ENCODE measurements at regions of chr9 and their contacts with region 1.

Region 1: GRCh38 chr9:91422758-91423711 is 597 bp downstream of the NFIL3 start:
- DNase-seq: peak; percentile 59 to 82
- ATAC-seq: peak; percentile 34 to 57 (median 50)
- H3K4me3 ChIP-seq: peak overlapping the region; percentile 75
- H3K4me3 Mint-ChIP-seq: peak overlapping the region; percentile 97
- H3K27ac ChIP-seq: peak overlapping the region; percentile 58
- H3K27ac Mint-ChIP-seq: peak overlapping the region; percentile 92 to 98
- H3K4me1 ChIP-seq: peaks cover 44% of the 10 kb centered on the region
- H3K4me1 Mint-ChIP-seq: peaks cover 57 to 66% of the 10 kb centered on the region in 2 donors
- H3K27me3 ChIP-seq: peaks cover 10% of the 10 kb centered on the region
- H3K27me3 Mint-ChIP-seq: peaks cover 0 to 5% of the 10 kb centered on the region in 2 donors
- CTCF ChIP-seq: no peak

Region 2: DNA sequence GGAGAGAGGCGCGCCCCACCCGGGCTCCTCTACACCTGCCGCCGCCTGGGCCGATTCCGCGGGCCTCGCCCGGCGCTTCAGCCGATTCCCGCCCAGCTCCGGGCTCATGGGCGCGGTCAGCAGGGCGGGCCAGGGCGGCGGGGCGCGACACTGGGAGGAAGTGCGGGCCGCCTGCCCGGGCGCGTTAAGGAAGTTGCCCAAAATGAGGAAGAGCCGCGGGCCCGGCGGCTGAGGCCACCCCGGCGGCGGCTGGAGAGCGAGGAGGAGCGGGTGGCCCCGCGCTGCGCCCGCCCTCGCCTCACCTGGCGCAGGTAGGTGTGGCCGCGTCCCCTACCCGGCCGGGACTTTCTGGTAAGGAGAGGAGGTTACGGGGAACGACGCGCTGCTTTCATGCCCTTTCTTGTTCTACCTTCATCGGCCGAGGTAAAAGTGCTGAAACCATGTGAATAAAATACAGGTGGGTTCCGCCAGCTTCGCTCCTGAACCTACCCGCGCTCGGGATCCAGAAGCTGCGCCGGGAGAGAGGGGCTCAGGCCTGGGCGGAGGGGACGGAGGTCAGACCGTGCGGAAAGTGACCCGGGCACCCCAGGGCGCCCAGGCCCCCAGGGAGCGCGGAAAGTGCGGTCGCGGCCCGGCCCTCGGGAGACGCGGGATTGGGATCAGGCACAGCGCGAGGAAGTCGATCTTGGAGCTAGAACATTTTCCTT is 621.3 kb before region 1 on chr9 and contains the start of gene SYK:
- intact Hi-C with region 1: loop called (anchors 5 kb)
- DNase-seq: peak in 1 of 2 donors; percentile 45
- ATAC-seq: peak; percentile 66 to 82 (median 69)
- H3K4me3 ChIP-seq: peak within 1 kb of the TSS; percentile 98
- H3K4me3 Mint-ChIP-seq: peak within 1 kb of the TSS; percentile 98
- H3K27ac ChIP-seq: peak within 1 kb of the TSS; percentile 86
- H3K27ac Mint-ChIP-seq: peak within 1 kb of the TSS; percentile 93 to 97
- H3K4me1 ChIP-seq: peaks cover 9% of the 10 kb centered on the region
- H3K4me1 Mint-ChIP-seq: peaks cover 50 to 64% of the 10 kb centered on the region in 2 donors
- H3K27me3 ChIP-seq: no peaks in the 10 kb centered on the region
- H3K27me3 Mint-ChIP-seq: no peaks in the 10 kb centered on the region
- CTCF ChIP-seq: no peak
- total RNA-seq, gene SYK: 75.5 to 104 (median 78.0) TPM

Region 3: GRCh38 chr9:90914868-90915483 is 508.1 kb before region 1 on chr9:
- intact Hi-C with region 1: loop called (anchors 1 kb)
- DNase-seq: peak; percentile 59 to 88
- ATAC-seq: peak; percentile 89 to 99 (median 99)
- H3K4me3 ChIP-seq: no peak overlapping the region
- H3K4me3 Mint-ChIP-seq: no peak overlapping the region
- H3K27ac ChIP-seq: no peak overlapping the region
- H3K27ac Mint-ChIP-seq: no peak overlapping the region
- H3K4me1 ChIP-seq: peaks cover 3% of the 10 kb centered on the region
- H3K4me1 Mint-ChIP-seq: no peaks in the 10 kb centered on the region
- H3K27me3 ChIP-seq: no peaks in the 10 kb centered on the region
- H3K27me3 Mint-ChIP-seq: peaks cover 0 to 3% of the 10 kb centered on the region in 2 donors
- CTCF ChIP-seq: peak; percentile 91

Region 4: GRCh38 chr9:91036826-91037510 is 386.1 kb before region 1 on chr9:
- intact Hi-C with region 1: loop called (anchors 2 kb)
- DNase-seq: peak; percentile 36 to 75
- ATAC-seq: peak; percentile 78 to 86 (median 82)
- H3K4me3 ChIP-seq: no peak overlapping the region
- H3K4me3 Mint-ChIP-seq: peak overlapping the region; percentile 69
- H3K27ac ChIP-seq: no peak overlapping the region
- H3K27ac Mint-ChIP-seq: peak overlapping the region in 1 of 2 donors; percentile 71
- H3K4me1 ChIP-seq: peaks cover 23% of the 10 kb centered on the region
- H3K4me1 Mint-ChIP-seq: peaks cover 37 to 47% of the 10 kb centered on the region in 2 donors
- H3K27me3 ChIP-seq: no peaks in the 10 kb centered on the region
- H3K27me3 Mint-ChIP-seq: peaks cover 0 to 4% of the 10 kb centered on the region in 2 donors
- CTCF ChIP-seq: peak; percentile 53

Region 5: DNA sequence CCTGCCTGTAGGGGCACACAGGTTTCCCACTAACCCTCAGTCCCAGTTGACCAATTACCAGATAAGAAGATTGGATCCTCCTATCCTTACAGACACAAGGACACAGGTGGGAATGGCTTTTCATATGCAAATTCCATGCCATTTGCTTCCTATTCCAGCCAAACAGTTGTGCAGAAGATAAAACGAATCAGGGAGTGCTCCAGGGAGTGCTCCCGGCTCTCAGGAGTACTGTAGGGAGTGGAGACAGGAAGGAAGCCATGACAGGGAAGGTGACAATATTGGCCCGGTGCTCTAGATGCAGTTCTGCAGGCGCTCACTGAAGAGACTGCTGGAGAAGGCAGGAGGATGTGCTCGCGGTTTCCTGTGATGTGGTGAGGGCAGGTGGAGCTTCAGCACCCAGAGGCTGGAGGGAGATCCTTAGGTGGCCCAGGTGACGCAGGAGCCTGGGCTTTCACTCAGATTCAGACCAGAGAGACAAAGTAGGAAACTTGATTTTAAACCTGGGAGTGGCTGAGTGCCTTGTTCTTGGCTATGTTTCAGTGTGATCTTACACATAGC is 321.3 kb before region 1 on chr9:
- intact Hi-C with region 1: loop called (anchors 5 kb)
- DNase-seq: peak; percentile 41 to 92
- ATAC-seq: peak; percentile 59 to 83 (median 63)
- H3K4me3 ChIP-seq: no peak overlapping the region
- H3K4me3 Mint-ChIP-seq: peak overlapping the region; percentile 57
- H3K27ac ChIP-seq: no peak overlapping the region
- H3K27ac Mint-ChIP-seq: peak overlapping the region; percentile 65 to 85
- H3K4me1 ChIP-seq: peaks cover 38% of the 10 kb centered on the region
- H3K4me1 Mint-ChIP-seq: peaks cover 36 to 37% of the 10 kb centered on the region in 2 donors
- H3K27me3 ChIP-seq: no peaks in the 10 kb centered on the region
- H3K27me3 Mint-ChIP-seq: peaks cover 0 to 5% of the 10 kb centered on the region in 2 donors
- CTCF ChIP-seq: no peak

Region 6: GRCh38 chr9:91164724-91165520 is 258.1 kb before region 1 on chr9:
- intact Hi-C with region 1: no loop called
- DNase-seq: peak; percentile 68 to 75
- ATAC-seq: peak; percentile 77 to 89 (median 78)
- H3K4me3 ChIP-seq: no peak overlapping the region
- H3K4me3 Mint-ChIP-seq: peak overlapping the region; percentile 87
- H3K27ac ChIP-seq: peak overlapping the region; percentile 78
- H3K27ac Mint-ChIP-seq: peak overlapping the region; percentile 93 to 94
- H3K4me1 ChIP-seq: peaks cover 62% of the 10 kb centered on the region
- H3K4me1 Mint-ChIP-seq: peaks cover 44 to 46% of the 10 kb centered on the region in 2 donors
- H3K27me3 ChIP-seq: no peaks in the 10 kb centered on the region
- H3K27me3 Mint-ChIP-seq: no peaks in the 10 kb centered on the region
- CTCF ChIP-seq: no peak

Region 7: GRCh38 chr9:91361291-91362050 is 61.6 kb before region 1 on chr9 and contains the start of gene AUH:
- intact Hi-C with region 1: loop called (anchors 1 kb)
- DNase-seq: peak; percentile 87 to 94
- ATAC-seq: peak; percentile 96 to 97 (median 97)
- H3K4me3 ChIP-seq: peak within 1 kb of the TSS; percentile 87
- H3K4me3 Mint-ChIP-seq: peak within 1 kb of the TSS; percentile 93
- H3K27ac ChIP-seq: peak within 1 kb of the TSS; percentile 50
- H3K27ac Mint-ChIP-seq: peak within 1 kb of the TSS; percentile 85 to 87
- H3K4me1 ChIP-seq: peaks cover 14% of the 10 kb centered on the region
- H3K4me1 Mint-ChIP-seq: peaks cover 39 to 48% of the 10 kb centered on the region in 2 donors
- H3K27me3 ChIP-seq: no peaks in the 10 kb centered on the region
- H3K27me3 Mint-ChIP-seq: no peaks in the 10 kb centered on the region
- CTCF ChIP-seq: no peak
- total RNA-seq, gene AUH: 26.7 to 36.6 (median 34.9) TPM

Region 8: DNA sequence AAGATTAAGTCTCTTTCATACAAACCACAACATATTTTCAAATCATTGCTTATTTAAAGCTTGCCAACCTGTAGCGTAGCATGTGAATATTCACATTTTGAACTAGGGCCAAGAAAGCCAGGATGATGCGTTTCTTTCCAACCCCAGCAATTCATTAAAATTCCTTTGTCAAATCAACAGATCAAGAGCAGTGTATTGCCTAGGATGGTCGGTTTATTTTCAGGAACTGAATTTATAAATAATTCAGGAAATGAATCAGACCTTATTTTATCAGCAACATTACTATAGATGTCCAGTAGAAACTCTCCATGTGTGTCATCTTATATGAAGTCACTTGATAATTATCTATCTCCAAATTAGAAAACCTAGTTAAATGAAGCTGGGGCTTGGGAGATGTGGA is 48.1 kb before region 1 on chr9:
- intact Hi-C with region 1: loop called (anchors 5 kb)
- DNase-seq: no peak
- ATAC-seq: no peak
- H3K4me3 ChIP-seq: no peak overlapping the region
- H3K4me3 Mint-ChIP-seq: no peak overlapping the region
- H3K27ac ChIP-seq: no peak overlapping the region
- H3K27ac Mint-ChIP-seq: no peak overlapping the region
- H3K4me1 ChIP-seq: peaks cover 16% of the 10 kb centered on the region
- H3K4me1 Mint-ChIP-seq: peaks cover 18 to 19% of the 10 kb centered on the region in 2 donors
- H3K27me3 ChIP-seq: no peaks in the 10 kb centered on the region
- H3K27me3 Mint-ChIP-seq: no peaks in the 10 kb centered on the region
- CTCF ChIP-seq: no peak

Region 9: DNA sequence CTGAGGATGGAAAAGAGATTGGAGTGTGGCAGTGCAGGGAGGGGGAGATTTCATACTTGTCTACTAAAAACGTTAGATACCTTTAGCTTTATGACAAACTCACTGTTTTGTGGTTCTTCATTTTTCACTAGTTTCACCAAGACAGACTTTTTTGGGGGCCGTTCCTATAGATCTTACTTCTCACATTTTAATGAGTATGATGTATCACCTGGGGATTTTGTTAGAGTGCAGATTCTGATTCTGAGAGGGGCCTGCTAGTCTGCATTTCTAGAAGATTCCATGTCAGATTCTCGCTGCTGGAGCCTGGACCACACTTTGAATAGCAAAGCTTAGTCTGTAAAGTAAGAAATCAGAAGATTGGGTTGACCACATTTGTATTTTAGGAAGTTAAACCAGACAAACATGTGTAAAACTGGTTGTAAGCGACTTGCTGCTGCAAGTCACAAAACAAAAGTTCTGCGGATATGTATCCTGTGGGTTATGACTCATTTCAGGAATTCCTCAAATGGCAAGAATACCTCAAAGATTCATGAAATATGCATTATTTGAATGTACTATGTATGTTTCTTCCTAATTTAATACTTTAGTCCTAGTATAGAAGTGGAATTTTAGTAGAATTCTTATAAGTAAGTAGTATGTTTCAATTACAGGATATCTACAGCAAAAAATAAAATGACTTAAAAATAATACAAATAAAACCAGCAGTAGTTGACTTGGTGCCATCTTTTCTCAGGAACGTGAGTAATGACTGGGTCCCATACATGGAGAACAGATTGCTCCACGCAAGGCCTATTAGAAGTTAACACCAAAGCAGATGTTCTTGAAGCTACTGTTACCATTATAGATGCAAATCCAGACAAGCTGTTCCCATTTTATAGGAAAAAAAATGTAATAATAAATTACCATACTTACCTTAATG is 27.2 kb before region 1 on chr9:
- intact Hi-C with region 1: no loop called
- DNase-seq: peak in 1 of 2 donors; percentile 14
- ATAC-seq: no peak
- H3K4me3 ChIP-seq: no peak overlapping the region
- H3K4me3 Mint-ChIP-seq: no peak overlapping the region
- H3K27ac ChIP-seq: no peak overlapping the region
- H3K27ac Mint-ChIP-seq: no peak overlapping the region
- H3K4me1 ChIP-seq: no peaks in the 10 kb centered on the region
- H3K4me1 Mint-ChIP-seq: peaks cover 0 to 8% of the 10 kb centered on the region in 2 donors
- H3K27me3 ChIP-seq: no peaks in the 10 kb centered on the region
- H3K27me3 Mint-ChIP-seq: no peaks in the 10 kb centered on the region
- CTCF ChIP-seq: no peak

Measured in natural killer cell (primary cell).